Right ventricle myocardium inferior (tissue), 1 donor: ENCODE measurements at regions of chr15 and their contacts with region 1.

Region 1: DNA sequence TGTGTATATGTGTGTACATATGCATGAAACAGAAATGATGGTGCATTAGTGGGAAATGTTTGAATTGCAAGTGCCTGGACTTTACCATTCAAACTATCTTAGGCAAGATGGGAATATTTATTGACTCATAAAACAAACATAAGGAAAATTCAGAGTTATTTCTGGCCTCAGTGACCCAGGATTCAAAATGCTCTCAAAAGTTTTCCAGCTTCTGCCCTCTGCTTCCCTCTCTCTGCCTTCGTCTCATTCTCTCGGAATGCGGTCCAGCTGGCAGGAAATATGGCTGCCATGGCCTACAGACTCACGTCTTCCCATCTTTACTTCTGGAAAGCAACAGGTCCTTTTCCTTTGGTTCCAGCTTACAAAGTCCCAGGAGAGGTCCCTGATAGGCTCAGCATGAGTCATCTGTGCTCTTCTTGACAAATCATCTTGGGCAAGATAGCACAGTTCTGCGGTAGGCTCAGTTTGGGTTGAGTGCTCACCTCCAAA is 8.7 kb upstream of the ZNF774 start:
- DNase-seq: no peak
- ATAC-seq: peak; percentile 56

Region 2: GRCh38 chr15:90154861-90155626 is 188.3 kb before region 1 on chr15:
- intact Hi-C with region 1: no loop called
- DNase-seq: no peak
- ATAC-seq: no peak

Region 3: GRCh38 chr15:90618330-90619125 is 275.2 kb after region 1 on chr15:
- intact Hi-C with region 1: loop called (anchors 10 kb)
- DNase-seq: no peak
- ATAC-seq: peak; percentile 30